Dendritic cell treated with granulocyte-macrophage colony-stimulating factor and Interleukin-4, amounts not matched to agents 40 ng/mL and 50 ng/mL, for 4 days (primary cell): ENCODE measurements at regions of chr2 and their contacts with region 1.

Region 1: DNA sequence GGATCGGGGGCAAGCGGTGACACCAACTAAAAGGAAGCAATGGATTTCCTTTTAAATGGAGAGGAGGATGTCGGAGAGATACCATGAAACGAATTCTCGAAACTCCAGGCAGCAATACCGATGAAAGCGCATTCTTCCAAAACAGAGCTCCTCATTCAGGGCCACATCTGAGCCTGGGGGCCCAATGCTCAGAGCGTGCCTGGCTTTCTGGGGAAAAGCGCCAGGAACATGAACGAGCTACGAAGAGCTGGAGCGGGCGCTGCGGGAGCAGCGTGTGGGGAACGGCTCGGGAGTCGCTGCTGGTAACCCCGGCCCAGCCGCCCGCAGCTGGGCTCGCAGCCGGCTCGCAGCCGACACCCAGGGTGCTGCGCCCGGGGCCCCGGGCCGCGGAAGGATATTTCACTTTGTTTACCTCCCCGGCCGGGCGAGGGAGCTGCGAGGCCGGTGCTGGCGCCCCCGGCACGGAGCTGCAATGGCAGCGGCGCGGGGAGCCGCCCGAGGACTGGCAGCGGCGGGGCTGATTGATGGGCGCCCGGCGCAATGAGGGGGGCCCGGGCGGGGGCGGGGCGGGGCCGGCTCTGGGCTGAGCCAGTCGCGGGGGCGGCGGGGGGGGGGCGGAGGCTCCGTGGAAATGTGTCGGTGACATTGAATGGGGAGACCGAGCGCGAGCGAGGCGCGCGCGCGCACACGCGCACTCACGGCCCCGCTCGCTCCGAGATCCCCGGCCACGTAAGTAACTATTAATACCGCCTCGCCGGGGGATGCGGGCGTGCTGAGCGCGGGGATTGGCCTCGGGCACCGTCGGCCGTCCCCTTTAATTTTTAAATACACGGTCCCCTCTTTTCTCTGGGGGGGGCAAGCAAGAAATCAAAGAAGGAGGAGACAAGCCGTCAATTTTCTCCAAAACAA is at the start of gene TRIB2:
- H3K4me3 Mint-ChIP-seq: peak within 1 kb of the TSS; percentile 96
- H3K27ac Mint-ChIP-seq: peak within 1 kb of the TSS; percentile 90
- H3K4me1 Mint-ChIP-seq: peaks cover 37% of the 10 kb centered on the region
- H3K27me3 Mint-ChIP-seq: peaks cover 59% of the 10 kb centered on the region

Region 2: GRCh38 chr2:11822746-11823451 is 893.6 kb before region 1 on chr2:
- intact Hi-C with region 1: loop called (anchors 2 kb)
- H3K4me3 Mint-ChIP-seq: no peak overlapping the region
- H3K27ac Mint-ChIP-seq: no peak overlapping the region
- H3K4me1 Mint-ChIP-seq: no peaks in the 10 kb centered on the region
- H3K27me3 Mint-ChIP-seq: peaks cover 33% of the 10 kb centered on the region

Region 3: GRCh38 chr2:11829947-11830707 is 886.4 kb before region 1 on chr2:
- intact Hi-C with region 1: loop called (anchors 2 kb)
- H3K4me3 Mint-ChIP-seq: peak overlapping the region; percentile 35
- H3K27ac Mint-ChIP-seq: peak overlapping the region; percentile 26
- H3K4me1 Mint-ChIP-seq: peaks cover 47% of the 10 kb centered on the region
- H3K27me3 Mint-ChIP-seq: peaks cover 63% of the 10 kb centered on the region

Region 4: DNA sequence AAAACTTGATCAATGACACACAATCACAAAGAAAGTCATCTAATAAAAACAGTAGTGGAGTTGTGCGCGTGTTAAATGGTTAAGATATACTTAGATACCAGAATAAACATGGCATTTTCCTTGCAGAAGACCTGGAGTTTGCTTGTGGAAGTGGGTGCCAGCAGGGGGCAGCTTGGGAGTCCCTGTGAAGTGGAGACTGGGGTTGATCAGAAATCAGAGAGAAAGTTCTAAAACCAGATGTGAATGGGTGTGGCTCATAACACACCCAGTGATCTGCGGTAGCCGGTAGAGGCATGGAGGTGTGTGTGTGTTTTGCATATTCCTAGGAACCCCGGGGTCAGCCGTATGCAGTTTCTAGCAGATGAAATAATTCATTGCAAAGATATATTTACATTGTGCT is 299.9 kb before region 1 on chr2:
- intact Hi-C with region 1: loop called (anchors 1 kb)
- H3K4me3 Mint-ChIP-seq: no peak overlapping the region
- H3K27ac Mint-ChIP-seq: no peak overlapping the region
- H3K4me1 Mint-ChIP-seq: peaks cover 8% of the 10 kb centered on the region
- H3K27me3 Mint-ChIP-seq: no peaks in the 10 kb centered on the region

Region 5: GRCh38 chr2:12931186-12931844 is 214.8 kb after region 1 on chr2:
- intact Hi-C with region 1: loop called (anchors 2 kb)
- H3K4me3 Mint-ChIP-seq: no peak overlapping the region
- H3K27ac Mint-ChIP-seq: no peak overlapping the region
- H3K4me1 Mint-ChIP-seq: no peaks in the 10 kb centered on the region
- H3K27me3 Mint-ChIP-seq: peaks cover 33% of the 10 kb centered on the region

Region 6: GRCh38 chr2:13006829-13007717 is 290.5 kb after region 1 on chr2:
- intact Hi-C with region 1: loop called (anchors 5 kb)
- H3K4me3 Mint-ChIP-seq: no peak overlapping the region
- H3K27ac Mint-ChIP-seq: no peak overlapping the region
- H3K4me1 Mint-ChIP-seq: peaks cover 11% of the 10 kb centered on the region
- H3K27me3 Mint-ChIP-seq: peaks cover 25% of the 10 kb centered on the region